ENCODE measurements at regions of chr9 and their contacts with region 1.

Region 1: GRCh38 chr9:137423004-137423874 is at the starts of genes EXD3 and NOXA1:
- DNase-seq: peak; percentile 98
- ATAC-seq: peak; percentile 95
- H3K4me3 Mint-ChIP-seq: peak within 1 kb of the TSS; percentile 82
- H3K27ac Mint-ChIP-seq: peak within 1 kb of the TSS; percentile 66
- H3K4me1 Mint-ChIP-seq: peaks cover 12% of the 10 kb centered on the region
- H3K27me3 Mint-ChIP-seq: no peaks in the 10 kb centered on the region
- total RNA-seq, gene EXD3: 6.7 to 7.1 TPM
- total RNA-seq, gene NOXA1: 0.97 to 1.7 TPM

Region 2: GRCh38 chr9:137240861-137241489 is 182.3 kb before region 1 on chr9 and contains the start of gene TUBB4B:
- CTCF ChIA-PET with region 1: no interaction called
- POLR2A ChIA-PET with region 1: no interaction called
- intact Hi-C with region 1: loop called in 1 of 2 experiments (anchors 1 kb)
- DNase-seq: peak; percentile 98
- ATAC-seq: peak; percentile 84
- H3K4me3 Mint-ChIP-seq: peak within 1 kb of the TSS; percentile 83
- H3K27ac Mint-ChIP-seq: peak within 1 kb of the TSS; percentile 87
- H3K4me1 Mint-ChIP-seq: peaks cover 27% of the 10 kb centered on the region
- H3K27me3 Mint-ChIP-seq: no peaks in the 10 kb centered on the region
- total RNA-seq, gene TUBB4B: 264 to 278 TPM

Region 3: DNA sequence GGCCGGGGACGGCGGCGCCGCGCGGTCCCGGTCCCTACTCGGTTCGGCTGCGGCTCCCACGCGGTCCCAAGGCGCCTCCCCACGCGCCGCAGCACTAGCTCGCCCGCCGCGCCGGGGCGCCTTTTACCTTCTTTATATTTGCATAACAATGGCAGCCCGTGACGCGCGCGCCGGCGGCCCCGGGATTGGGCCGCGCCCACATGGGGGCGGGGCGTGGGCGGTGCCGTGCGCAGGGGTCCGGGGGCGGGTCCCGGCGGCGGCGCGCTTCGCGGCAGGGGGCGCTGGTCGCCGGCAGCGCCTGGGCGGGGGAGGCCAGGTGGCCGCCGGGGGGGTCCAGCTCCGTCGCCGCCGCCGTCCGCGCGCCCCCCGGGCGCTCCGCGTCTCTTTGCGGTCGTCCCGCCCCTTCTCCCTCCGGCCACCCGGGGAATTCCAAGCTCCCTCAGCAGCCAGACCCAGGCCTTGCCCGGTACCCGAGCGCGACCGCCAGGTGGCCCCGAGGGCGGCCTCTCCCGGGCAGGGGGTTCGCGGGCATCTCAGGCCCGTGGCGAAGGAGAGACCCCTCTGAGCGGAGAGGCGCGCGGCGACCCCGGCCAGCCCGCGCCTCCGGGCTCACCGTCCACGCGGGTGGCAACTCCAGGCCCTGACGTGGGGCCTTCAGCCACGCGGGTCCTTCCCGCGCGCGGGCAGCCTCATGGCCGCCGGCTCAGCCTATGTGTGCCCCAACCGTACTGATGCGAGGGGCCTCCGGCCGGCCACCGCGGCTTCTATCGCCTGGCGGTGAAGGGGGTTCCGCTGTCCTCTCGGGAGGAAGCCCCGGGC is 120.9 kb before region 1 on chr9 and contains the start of gene NRARP:
- CTCF ChIA-PET with region 1: interaction called, 3 read pairs
- POLR2A ChIA-PET with region 1: no interaction called
- intact Hi-C with region 1: loop called in 1 of 2 experiments (anchors 1 kb)
- DNase-seq: peak; percentile 96
- ATAC-seq: peak; percentile 75
- H3K4me3 Mint-ChIP-seq: peak within 1 kb of the TSS; percentile 74
- H3K27ac Mint-ChIP-seq: no peak within 1 kb of the TSS
- H3K4me1 Mint-ChIP-seq: peaks cover 15% of the 10 kb centered on the region
- H3K27me3 Mint-ChIP-seq: peaks cover 10% of the 10 kb centered on the region
- total RNA-seq, gene NRARP: 2.1 TPM

Region 4: GRCh38 chr9:137372693-137373610 is 50.3 kb before region 1 on chr9:
- CTCF ChIA-PET with region 1: no interaction called
- POLR2A ChIA-PET with region 1: no interaction called
- intact Hi-C with region 1: no loop called
- DNase-seq: peak; percentile 3
- ATAC-seq: no peak
- H3K4me3 Mint-ChIP-seq: no peak overlapping the region
- H3K27ac Mint-ChIP-seq: no peak overlapping the region
- H3K4me1 Mint-ChIP-seq: no peaks in the 10 kb centered on the region
- H3K27me3 Mint-ChIP-seq: no peaks in the 10 kb centered on the region

Region 5: DNA sequence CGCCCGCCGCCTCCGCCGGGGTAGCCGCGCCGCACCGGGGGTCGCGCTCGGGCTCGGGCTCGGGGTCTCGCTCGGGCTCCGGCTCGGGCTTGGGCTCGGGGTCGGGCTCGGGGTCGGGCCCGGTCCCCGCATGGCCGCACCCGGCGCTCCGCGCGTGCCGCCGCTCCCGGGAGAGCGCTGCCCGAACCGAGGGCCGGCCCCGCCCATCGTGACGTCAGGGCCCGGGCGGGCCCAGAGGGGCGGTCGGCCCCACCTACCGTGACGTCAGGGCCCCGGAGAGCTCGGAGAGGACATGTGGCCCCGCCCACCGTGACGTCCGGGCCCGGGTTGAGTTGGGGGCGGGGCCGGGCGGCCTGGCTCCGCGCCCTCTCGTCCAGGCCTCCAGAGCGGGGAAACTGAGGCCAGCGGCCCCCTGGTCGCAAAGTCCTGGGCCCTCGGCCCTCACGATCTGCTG is 35.9 kb after region 1 on chr9 and contains the start of gene NSMF:
- CTCF ChIA-PET with region 1: interaction called, 3 read pairs
- POLR2A ChIA-PET with region 1: no interaction called
- intact Hi-C with region 1: loop called in 1 of 2 experiments (anchors 1 kb)
- DNase-seq: peak; percentile 98
- ATAC-seq: peak; percentile 66
- H3K4me3 Mint-ChIP-seq: peak within 1 kb of the TSS; percentile 39
- H3K27ac Mint-ChIP-seq: peak within 1 kb of the TSS; percentile 78
- H3K4me1 Mint-ChIP-seq: peaks cover 33% of the 10 kb centered on the region
- H3K27me3 Mint-ChIP-seq: no peaks in the 10 kb centered on the region
- total RNA-seq, gene NSMF: 63.6 to 65.0 TPM

Region 6: GRCh38 chr9:137590462-137591383 is 167.5 kb after region 1 on chr9 and contains the start of gene ZMYND19:
- CTCF ChIA-PET with region 1: no interaction called
- POLR2A ChIA-PET with region 1: no interaction called
- intact Hi-C with region 1: loop called in 1 of 2 experiments (anchors 1 kb)
- DNase-seq: peak; percentile 94
- ATAC-seq: peak; percentile 97
- H3K4me3 Mint-ChIP-seq: peak within 1 kb of the TSS; percentile 87
- H3K27ac Mint-ChIP-seq: peak within 1 kb of the TSS; percentile 95
- H3K4me1 Mint-ChIP-seq: peaks cover 17% of the 10 kb centered on the region
- H3K27me3 Mint-ChIP-seq: no peaks in the 10 kb centered on the region
- total RNA-seq, gene ZMYND19: 36.2 to 43.0 TPM